Uterus (tissue), 4 donors: ENCODE measurements at regions of chr6 and their contacts with region 1.

Region 1: DNA sequence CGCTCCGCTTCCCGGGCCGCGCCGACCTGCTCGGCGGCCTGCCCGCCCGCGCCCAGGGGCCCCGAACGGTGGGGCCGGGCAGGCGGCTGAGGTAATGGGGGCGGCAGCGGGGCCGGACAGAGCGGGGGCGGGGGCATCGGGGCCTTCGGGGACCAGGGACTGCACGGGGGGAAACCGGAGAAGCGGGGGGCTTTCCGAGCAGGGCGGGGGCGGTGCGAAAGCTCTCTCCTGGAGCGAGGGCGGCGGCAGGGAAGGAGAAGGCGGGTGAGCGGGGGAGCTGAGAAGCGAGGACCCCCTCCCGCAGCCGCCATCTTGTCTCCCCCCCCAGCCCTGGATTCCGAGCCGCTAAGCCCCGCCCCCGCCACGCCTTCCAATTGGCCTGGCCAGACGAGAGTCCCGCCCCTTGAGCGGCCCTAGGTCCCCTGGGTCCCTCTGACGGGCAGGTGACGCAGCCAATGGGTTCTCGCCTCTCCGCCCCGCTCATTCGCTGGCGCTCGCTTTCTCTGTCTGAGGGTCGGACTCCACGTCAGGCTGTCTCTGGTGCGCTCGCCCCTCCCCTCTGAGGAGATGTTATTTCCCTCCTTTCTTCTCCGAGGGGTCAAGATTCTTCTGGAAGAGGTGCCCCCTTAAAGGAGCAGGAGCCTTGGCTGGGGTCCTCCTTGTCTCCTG is 470 bp downstream of the BRPF3 start:
- DNase-seq: peak; percentile 99
- H3K4me3 ChIP-seq: peak overlapping the region; percentile 86 to 94
- H3K27ac ChIP-seq: peak overlapping the region; percentile 98
- H3K4me1 ChIP-seq: peaks cover 0 to 7% of the 10 kb centered on the region in 2 donors
- H3K27me3 ChIP-seq: no peaks in the 10 kb centered on the region
- CTCF ChIP-seq: no peak
- POLR2A ChIP-seq: peak; percentile 60 to 88

Region 2: DNA sequence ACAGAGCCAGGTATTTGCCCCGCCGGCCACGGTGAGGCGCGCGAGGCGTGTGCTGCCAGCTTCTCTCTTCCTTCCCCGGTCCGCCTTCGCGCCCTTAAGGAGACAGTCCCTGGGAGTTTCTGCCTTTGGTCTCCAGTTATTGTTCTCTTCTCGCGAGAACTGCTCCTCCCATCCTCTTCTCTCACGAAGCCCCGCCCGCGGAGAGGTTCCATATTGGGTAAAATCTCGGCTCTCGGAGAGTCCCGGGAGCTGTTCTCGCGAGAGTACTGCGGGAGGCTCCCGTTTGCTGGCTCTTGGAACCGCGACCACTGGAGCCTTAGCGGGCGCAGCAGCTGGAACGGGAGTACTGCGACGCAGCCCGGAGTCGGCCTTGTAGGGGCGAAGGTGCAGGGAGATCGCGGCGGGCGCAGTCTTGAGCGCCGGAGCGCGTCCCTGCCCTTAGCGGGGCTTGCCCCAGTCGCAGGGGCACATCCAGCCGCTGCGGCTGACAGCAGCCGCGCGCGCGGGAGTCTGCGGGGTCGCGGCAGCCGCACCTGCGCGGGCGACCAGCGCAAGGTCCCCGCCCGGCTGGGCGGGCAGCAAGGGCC is 169.4 kb before region 1 on chr6 and contains the start of gene MAPK14:
- intact Hi-C with region 1: loop called (anchors 10 kb)
- DNase-seq: peak; percentile 99 to 100
- H3K4me3 ChIP-seq: peak within 1 kb of the TSS; percentile 55 to 91
- H3K27ac ChIP-seq: peak within 1 kb of the TSS; percentile 86 to 94
- H3K4me1 ChIP-seq: peaks cover 4 to 9% of the 10 kb centered on the region in 2 donors
- H3K27me3 ChIP-seq: no peaks in the 10 kb centered on the region
- CTCF ChIP-seq: peak; percentile 93 to 98 (median 97)
- POLR2A ChIP-seq: peak; percentile 93 to 94
- total RNA-seq, gene MAPK14: 62.0 to 117 (median 86.2) TPM

Region 3: GRCh38 chr6:36123257-36124139 is 73.5 kb before region 1 on chr6:
- intact Hi-C with region 1: loop called (anchors 10 kb)
- DNase-seq: peak; percentile 73 to 78
- H3K4me3 ChIP-seq: no peak overlapping the region
- H3K27ac ChIP-seq: no peak overlapping the region
- H3K4me1 ChIP-seq: no peaks in the 10 kb centered on the region
- H3K27me3 ChIP-seq: no peaks in the 10 kb centered on the region
- CTCF ChIP-seq: peak; percentile 48 to 74 (median 62)
- POLR2A ChIP-seq: no peak

Region 4: DNA sequence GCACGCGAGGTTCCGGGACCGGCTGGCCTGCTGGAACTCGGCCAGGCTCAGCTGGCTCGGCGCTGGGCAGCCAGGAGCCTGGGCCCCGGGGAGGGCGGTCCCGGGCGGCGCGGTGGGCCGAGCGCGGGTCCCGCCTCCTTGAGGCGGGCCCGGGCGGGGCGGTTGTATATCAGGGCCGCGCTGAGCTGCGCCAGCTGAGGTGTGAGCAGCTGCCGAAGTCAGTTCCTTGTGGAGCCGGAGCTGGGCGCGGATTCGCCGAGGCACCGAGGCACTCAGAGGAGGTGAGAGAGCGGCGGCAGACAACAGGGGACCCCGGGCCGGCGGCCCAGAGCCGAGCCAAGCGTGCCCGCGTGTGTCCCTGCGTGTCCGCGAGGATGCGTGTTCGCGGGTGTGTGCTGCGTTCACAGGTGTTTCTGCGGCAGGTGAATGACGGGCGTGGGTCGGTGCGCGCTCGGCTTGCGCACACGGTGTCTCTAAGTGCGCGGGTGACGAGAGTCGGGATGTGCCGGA is 481.6 kb after region 1 on chr6 and contains the start of gene CDKN1A:
- intact Hi-C with region 1: no loop called
- DNase-seq: peak; percentile 90 to 92
- H3K4me3 ChIP-seq: peak within 1 kb of the TSS; percentile 73 to 94
- H3K27ac ChIP-seq: peak within 1 kb of the TSS; percentile 100
- H3K4me1 ChIP-seq: peaks cover 0 to 5% of the 10 kb centered on the region in 2 donors
- H3K27me3 ChIP-seq: no peaks in the 10 kb centered on the region
- CTCF ChIP-seq: peak in 2 of 4 experiments; percentile 40 to 43
- POLR2A ChIP-seq: peak; percentile 99 to 100
- total RNA-seq, gene CDKN1A: 8.8 to 119 (median 75.8) TPM

Region 5: DNA sequence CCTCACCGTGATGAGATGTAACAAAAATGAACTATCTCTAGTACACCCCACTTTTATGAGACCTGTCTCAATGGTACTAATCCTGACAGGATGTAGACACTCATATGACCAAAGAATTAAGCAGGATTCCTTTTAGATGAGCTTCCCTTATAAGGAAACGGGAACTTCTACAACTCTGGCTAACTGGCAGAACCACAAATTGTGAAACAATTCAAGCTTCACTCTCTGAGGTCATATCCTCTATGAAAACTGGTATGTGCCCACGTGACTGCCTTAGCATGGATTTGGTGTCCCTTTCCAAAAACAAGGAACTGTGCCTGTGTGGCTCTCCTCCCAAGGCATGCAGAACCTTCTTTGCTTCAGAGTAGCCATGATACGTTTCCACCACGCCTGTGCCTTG is 656.3 kb after region 1 on chr6:
- intact Hi-C with region 1: no loop called
- DNase-seq: peak; percentile 61 to 68
- H3K4me3 ChIP-seq: no peak overlapping the region
- H3K27ac ChIP-seq: peak overlapping the region; percentile 74 to 82
- H3K4me1 ChIP-seq: peaks cover 0 to 7% of the 10 kb centered on the region in 2 donors
- H3K27me3 ChIP-seq: no peaks in the 10 kb centered on the region
- CTCF ChIP-seq: no peak
- POLR2A ChIP-seq: no peak